ENCODE measurements at regions of chr1 and their contacts with region 1.

Region 1: DNA sequence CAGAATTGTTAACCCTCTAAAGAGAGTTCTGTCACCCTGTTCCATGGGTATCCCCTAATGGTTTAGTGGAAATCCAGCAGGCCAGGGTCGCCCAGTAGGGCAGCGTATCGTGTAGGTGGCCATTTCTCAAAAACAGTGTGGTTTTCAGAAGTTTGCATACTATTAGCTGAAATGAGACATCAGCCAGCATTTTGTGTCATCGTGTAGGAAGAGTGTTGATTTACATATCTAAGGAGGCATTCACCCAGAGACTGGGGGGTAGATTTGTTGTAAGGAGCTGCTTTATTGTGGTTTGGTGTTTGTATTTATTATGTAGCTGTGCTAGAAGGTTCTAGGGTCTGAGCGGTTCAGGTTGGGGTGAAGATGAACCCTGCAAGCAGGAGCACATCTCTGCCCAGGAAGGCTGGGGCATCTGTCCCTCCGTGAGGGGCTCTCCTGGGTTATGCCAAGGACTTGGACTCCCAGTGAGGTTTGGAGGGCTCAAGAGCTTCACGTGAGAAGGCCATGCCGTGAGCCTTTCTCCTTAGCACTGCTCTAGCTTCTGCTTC is 174.4 kb downstream of the PGBD5 start:
- DNase-seq: no peak
- ATAC-seq: no peak
- H3K4me3 ChIP-seq: no peak overlapping the region
- H3K27ac ChIP-seq: no peak overlapping the region
- H3K4me1 ChIP-seq: peaks cover 6 to 9% of the 10 kb centered on the region in 2 donors
- H3K27me3 ChIP-seq: no peaks in the 10 kb centered on the region
- CTCF ChIP-seq: no peak
- POLR2A ChIP-seq: no peak

Region 2: DNA sequence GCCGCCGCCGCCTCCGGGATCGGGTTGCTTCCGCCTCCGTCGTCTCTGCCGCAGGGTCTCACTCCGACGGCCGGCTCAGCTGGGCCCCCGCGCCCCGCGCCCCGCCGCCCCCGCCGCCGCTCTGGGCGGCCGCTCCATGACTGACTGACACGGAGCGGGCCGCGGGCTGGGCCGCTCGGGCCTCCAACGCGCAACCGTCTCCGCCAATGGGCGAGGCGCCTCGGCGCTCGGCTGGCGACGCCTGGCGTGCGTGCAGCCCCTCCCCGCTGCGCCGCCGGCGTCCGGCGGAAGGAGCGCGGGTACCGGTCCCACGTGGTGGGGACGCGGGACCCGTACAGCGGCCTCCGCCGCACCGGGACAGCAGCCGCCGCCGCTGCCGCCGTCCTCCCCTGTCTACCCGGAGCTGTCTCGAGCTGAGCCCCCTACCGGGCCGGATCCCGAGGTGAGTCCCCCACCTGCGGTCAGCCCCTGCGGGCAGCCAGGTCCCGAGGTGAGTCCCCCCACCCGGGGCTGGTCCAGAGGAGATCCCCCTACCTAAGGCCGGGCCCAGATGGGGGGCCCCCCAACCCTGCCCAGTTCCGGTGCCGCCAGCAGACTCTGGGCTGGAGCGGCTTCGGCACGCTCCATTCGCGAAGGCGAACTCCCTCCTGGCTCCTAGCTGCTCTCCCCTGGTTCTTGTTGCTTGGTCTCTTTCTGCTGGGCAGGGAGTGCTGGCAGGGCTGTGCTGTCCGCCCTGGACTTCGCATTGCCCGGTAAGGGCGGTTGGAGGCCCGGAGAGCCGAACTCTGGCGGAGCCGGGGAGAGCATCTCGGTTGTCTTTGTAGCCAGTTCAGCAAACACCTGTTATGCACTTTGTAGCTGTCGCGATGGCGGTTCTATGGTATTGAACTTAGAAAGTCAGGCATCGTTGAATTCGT is 625.5 kb before region 1 on chr1 and contains the starts of genes TAF5L and URB2:
- in situ Hi-C with region 1: no loop called
- intact Hi-C with region 1: no loop called
- DNase-seq: peak; percentile 80 to 85
- ATAC-seq: peak; percentile 77 to 82
- H3K4me3 ChIP-seq: peak within 1 kb of the TSS; percentile 92 to 100 (median 98)
- H3K27ac ChIP-seq: peak within 1 kb of the TSS; percentile 92 to 99 (median 96)
- H3K4me1 ChIP-seq: peaks cover 49 to 51% of the 10 kb centered on the region in 2 donors
- H3K27me3 ChIP-seq: no peaks in the 10 kb centered on the region
- CTCF ChIP-seq: peak in 3 of 5 experiments; percentile 24 to 35 (median 28)
- POLR2A ChIP-seq: peak; percentile 86 to 91
- total RNA-seq, gene TAF5L: 14.5 to 37.4 (median 24.3) TPM
- total RNA-seq, gene URB2: 9.9 to 20.6 (median 13.4) TPM

Region 3: DNA sequence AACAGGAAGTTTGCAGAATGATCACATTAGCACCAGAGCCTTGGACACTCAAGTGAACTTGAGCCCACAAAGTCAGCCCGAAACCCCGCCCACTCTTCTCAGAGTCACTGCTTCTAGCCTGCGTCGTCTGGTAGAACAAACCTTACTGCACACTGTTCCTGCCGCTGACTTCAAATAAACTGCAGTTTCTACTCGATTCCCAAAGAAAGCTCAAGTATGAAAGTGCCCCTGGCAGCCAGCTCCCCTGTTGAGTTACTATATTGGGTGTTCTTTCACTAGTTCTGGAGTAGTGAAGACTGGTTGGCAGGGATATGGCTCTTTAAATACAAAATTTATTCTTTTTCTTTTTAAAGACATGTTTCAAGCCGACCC is 20.0 kb before region 1 on chr1:
- in situ Hi-C with region 1: no loop called
- intact Hi-C with region 1: loop called (anchors 2 kb)
- DNase-seq: peak in 1 of 2 donors; percentile 63
- ATAC-seq: peak; percentile 76 to 83
- H3K4me3 ChIP-seq: peak overlapping the region in 3 of 4 donors; percentile 7 to 15 (median 8)
- H3K27ac ChIP-seq: peak overlapping the region; percentile 30 to 52 (median 38)
- H3K4me1 ChIP-seq: peaks cover 31 to 35% of the 10 kb centered on the region in 2 donors
- H3K27me3 ChIP-seq: no peaks in the 10 kb centered on the region
- CTCF ChIP-seq: no peak
- POLR2A ChIP-seq: no peak

Region 4: GRCh38 chr1:230292689-230293389 is 41.1 kb after region 1 on chr1:
- in situ Hi-C with region 1: no loop called
- intact Hi-C with region 1: no loop called
- DNase-seq: peak in 1 of 2 donors; percentile 4
- ATAC-seq: no peak
- H3K4me3 ChIP-seq: no peak overlapping the region
- H3K27ac ChIP-seq: no peak overlapping the region
- H3K4me1 ChIP-seq: no peaks in the 10 kb centered on the region
- H3K27me3 ChIP-seq: peaks cover 0 to 6% (median 0%) of the 10 kb centered on the region in 3 donors
- CTCF ChIP-seq: no peak
- POLR2A ChIP-seq: no peak

Region 5: GRCh38 chr1:230317823-230318819 is 66.4 kb after region 1 on chr1:
- in situ Hi-C with region 1: no loop called
- intact Hi-C with region 1: no loop called
- DNase-seq: no peak
- ATAC-seq: no peak
- H3K4me3 ChIP-seq: no peak overlapping the region
- H3K27ac ChIP-seq: no peak overlapping the region
- H3K4me1 ChIP-seq: peaks cover 25% of the 10 kb centered on the region in 2 donors
- H3K27me3 ChIP-seq: no peaks in the 10 kb centered on the region
- CTCF ChIP-seq: no peak
- POLR2A ChIP-seq: no peak

Measured in gastrocnemius medialis (tissue), 4 donors.